ENCODE measurements at regions of chr18 and their contacts with region 1.

Region 1: GRCh38 chr18:46281185-46282176 is 177.3 kb downstream of the HAUS1 start:
- DNase-seq: no peak
- H3K4me3 ChIP-seq: no peak overlapping the region
- H3K27ac ChIP-seq: no peak overlapping the region
- H3K4me1 ChIP-seq: peaks cover 0 to 7% (median 0%) of the 10 kb centered on the region in 3 donors
- H3K27me3 ChIP-seq: no peaks in the 10 kb centered on the region
- CTCF ChIP-seq: peak in 5 of 6 experiments; percentile 87 to 93 (median 91)
- POLR2A ChIP-seq: no peak

Region 2: GRCh38 chr18:46173393-46174341 is 107.8 kb before region 1 on chr18:
- intact Hi-C with region 1: loop called (anchors 10 kb)
- DNase-seq: peak; percentile 74
- H3K4me3 ChIP-seq: peak overlapping the region; percentile 90 to 100 (median 98)
- H3K27ac ChIP-seq: peak overlapping the region; percentile 92 to 98 (median 96)
- H3K4me1 ChIP-seq: peaks cover 11 to 47% (median 14%) of the 10 kb centered on the region in 3 donors
- H3K27me3 ChIP-seq: no peaks in the 10 kb centered on the region
- CTCF ChIP-seq: peak; percentile 79 to 89 (median 84)
- POLR2A ChIP-seq: peak in 2 of 4 donors; percentile 50 to 53

Region 3: DNA sequence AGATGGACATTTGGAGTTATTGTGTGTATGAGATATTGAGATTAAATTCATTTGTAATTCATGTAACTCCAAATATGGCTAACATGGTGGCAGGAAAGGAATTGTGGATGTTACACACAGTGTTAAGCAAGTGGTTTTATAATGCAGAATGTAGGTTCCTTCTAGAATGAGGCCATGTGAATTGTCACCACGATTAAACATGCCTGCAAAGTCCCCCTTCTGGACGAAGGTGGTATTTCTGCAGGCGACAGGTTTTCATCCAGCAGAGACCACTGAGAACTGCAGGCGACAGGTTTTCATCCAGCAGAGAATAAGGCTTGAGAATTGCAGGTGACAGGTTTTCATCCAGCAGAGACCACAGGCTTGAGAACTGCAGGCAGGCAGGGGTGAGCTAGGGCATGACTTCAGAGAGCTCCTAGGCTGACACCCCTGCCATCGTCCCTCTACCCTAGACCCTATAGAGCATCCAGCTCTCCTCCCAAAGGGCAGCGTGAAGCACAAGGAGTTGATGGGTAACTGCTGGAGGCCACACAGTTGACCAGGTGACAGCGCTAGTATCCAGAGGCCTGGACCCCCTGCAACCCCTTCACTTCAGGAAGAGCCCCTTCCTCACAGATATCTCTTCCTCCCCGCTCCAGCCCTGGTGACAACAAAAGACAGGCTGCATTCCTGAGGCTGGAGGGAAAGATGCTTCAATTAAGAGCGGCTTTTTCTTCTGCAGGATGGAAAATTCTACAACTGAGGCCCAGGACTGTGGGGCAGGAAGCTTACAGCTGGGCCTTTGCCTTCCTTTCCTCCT is 199.8 kb after region 1 on chr18:
- intact Hi-C with region 1: loop called (anchors 10 kb)
- DNase-seq: no peak
- H3K4me3 ChIP-seq: no peak overlapping the region
- H3K27ac ChIP-seq: peak overlapping the region in 2 of 4 donors; percentile 4 to 42
- H3K4me1 ChIP-seq: peaks cover 0 to 31% (median 0%) of the 10 kb centered on the region in 3 donors
- H3K27me3 ChIP-seq: peaks cover 0 to 13% (median 0%) of the 10 kb centered on the region in 4 donors
- CTCF ChIP-seq: peak; percentile 29 to 69 (median 60)
- POLR2A ChIP-seq: no peak

Region 4: GRCh38 chr18:46657115-46657955 is 375.9 kb after region 1 on chr18 and contains the start of gene LOXHD1:
- intact Hi-C with region 1: loop called (anchors 5 kb)
- DNase-seq: no peak
- H3K4me3 ChIP-seq: no peak within 1 kb of the TSS
- H3K27ac ChIP-seq: no peak within 1 kb of the TSS
- H3K4me1 ChIP-seq: no peaks in the 10 kb centered on the region
- H3K27me3 ChIP-seq: peaks cover 0 to 4% (median 0%) of the 10 kb centered on the region in 4 donors
- CTCF ChIP-seq: no peak
- POLR2A ChIP-seq: no peak
- total RNA-seq, gene LOXHD1: 0.19 TPM in 1 of 4 donors, not detected in the others

Measured in esophagus squamous epithelium (tissue), 5 donors.